ENCODE measurements at regions of chr12 and their contacts with region 1.

Region 1: GRCh38 chr12:45990468-45991283 is at the start of gene SCAF11:
- DNase-seq: peak; percentile 100
- H3K4me3 ChIP-seq: peak within 1 kb of the TSS; percentile 64 to 99 (median 93)
- H3K27ac ChIP-seq: peak within 1 kb of the TSS; percentile 97 to 99 (median 99)
- H3K4me1 ChIP-seq: peaks cover 31 to 41% of the 10 kb centered on the region in 2 donors
- H3K27me3 ChIP-seq: no peaks in the 10 kb centered on the region
- CTCF ChIP-seq: peak; percentile 86 to 100 (median 99)
- POLR2A ChIP-seq: peak; percentile 88 to 95
- total RNA-seq, gene SCAF11: 69.5 to 170 (median 91.4) TPM

Region 2: GRCh38 chr12:45728630-45729232 is 261.9 kb before region 1 on chr12:
- intact Hi-C with region 1: loop called in 1 of 2 experiments (anchors 5 kb)
- DNase-seq: peak; percentile 95 to 99 (median 97)
- H3K4me3 ChIP-seq: peak overlapping the region; percentile 11 to 93 (median 91)
- H3K27ac ChIP-seq: peak overlapping the region; percentile 90 to 99 (median 98)
- H3K4me1 ChIP-seq: peaks cover 15 to 43% of the 10 kb centered on the region in 2 donors
- H3K27me3 ChIP-seq: no peaks in the 10 kb centered on the region
- CTCF ChIP-seq: peak; percentile 70 to 99 (median 91)
- POLR2A ChIP-seq: peak; percentile 86 to 97

Region 3: GRCh38 chr12:46071769-46072624 is 81.3 kb after region 1 on chr12:
- intact Hi-C with region 1: no loop called
- DNase-seq: peak; percentile 60 to 86 (median 83)
- H3K4me3 ChIP-seq: no peak overlapping the region
- H3K27ac ChIP-seq: no peak overlapping the region
- H3K4me1 ChIP-seq: no peaks in the 10 kb centered on the region
- H3K27me3 ChIP-seq: no peaks in the 10 kb centered on the region
- CTCF ChIP-seq: peak; percentile 83 to 97 (median 94)
- POLR2A ChIP-seq: no peak